CD8-positive, alpha-beta T cell (primary cell): ENCODE measurements at regions of chr7 and their contacts with region 1.

Region 1: DNA sequence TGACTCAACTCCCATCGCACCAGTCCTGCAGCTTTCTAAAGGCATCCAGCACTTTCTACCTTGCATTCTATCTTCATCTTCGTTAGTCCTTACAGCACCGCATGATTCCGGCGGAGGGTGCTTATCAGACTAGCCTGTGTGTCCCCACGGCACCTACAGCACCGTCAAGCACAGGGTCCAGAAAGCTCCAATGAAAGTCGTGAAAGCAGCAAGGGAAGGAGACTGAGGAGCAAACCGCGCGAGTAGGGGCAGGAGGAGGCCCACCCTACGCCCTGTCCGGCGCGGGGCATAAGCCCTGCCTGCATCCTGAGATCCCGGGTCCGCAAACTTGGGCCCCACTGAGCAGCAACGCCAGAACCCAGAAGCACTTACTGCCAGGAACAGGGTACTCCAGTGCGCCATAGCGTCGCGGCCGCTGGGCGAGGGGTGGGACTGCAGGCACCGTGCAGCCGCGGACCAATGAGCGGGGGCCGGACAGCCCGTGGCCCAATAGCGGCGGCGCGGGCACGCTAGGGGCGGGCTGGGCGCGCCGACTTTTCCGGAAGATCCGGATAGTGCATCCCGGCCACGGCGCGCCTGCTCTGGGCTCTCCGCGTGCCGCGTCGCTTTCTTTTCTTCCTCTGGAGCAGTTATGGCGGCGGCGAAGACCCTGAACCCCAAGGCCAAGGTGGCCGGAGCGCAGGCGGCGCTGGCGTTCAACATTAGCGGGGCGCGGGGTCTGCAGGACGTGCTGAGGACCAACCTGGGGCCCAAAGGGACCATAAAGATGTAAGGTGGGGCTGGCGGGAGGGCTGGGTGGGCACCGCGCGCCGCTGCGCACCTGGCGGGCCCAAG is 122.1 kb upstream of the VKORC1L1 start:
- DNase-seq: peak; percentile 65 to 91 (median 87)
- ATAC-seq: peak; percentile 96
- H3K4me3 ChIP-seq: peak overlapping the region; percentile 77 to 88
- H3K4me3 Mint-ChIP-seq: peak overlapping the region; percentile 88
- H3K27ac ChIP-seq: peak overlapping the region; percentile 74 to 81
- H3K27ac Mint-ChIP-seq: peak overlapping the region; percentile 88
- H3K4me1 ChIP-seq: peaks cover 16% of the 10 kb centered on the region
- H3K4me1 Mint-ChIP-seq: peaks cover 35% of the 10 kb centered on the region
- H3K27me3 ChIP-seq: no peaks in the 10 kb centered on the region
- H3K27me3 Mint-ChIP-seq: no peaks in the 10 kb centered on the region
- CTCF ChIP-seq: no peak

Region 2: GRCh38 chr7:64307254-64308015 is 1443.3 kb before region 1 on chr7:
- CTCF ChIA-PET with region 1: no interaction called
- POLR2A ChIA-PET with region 1: no interaction called
- intact Hi-C with region 1: loop called in 1 of 2 experiments (anchors 10 kb)
- DNase-seq: peak; percentile 88 to 97 (median 94)
- ATAC-seq: peak; percentile 98
- H3K4me3 ChIP-seq: peak overlapping the region; percentile 71 to 80
- H3K4me3 Mint-ChIP-seq: peak overlapping the region; percentile 95
- H3K27ac ChIP-seq: peak overlapping the region; percentile 77 to 91
- H3K27ac Mint-ChIP-seq: peak overlapping the region; percentile 99
- H3K4me1 ChIP-seq: peaks cover 14% of the 10 kb centered on the region
- H3K4me1 Mint-ChIP-seq: peaks cover 14% of the 10 kb centered on the region
- H3K27me3 ChIP-seq: no peaks in the 10 kb centered on the region
- H3K27me3 Mint-ChIP-seq: no peaks in the 10 kb centered on the region
- CTCF ChIP-seq: no peak

Region 3: DNA sequence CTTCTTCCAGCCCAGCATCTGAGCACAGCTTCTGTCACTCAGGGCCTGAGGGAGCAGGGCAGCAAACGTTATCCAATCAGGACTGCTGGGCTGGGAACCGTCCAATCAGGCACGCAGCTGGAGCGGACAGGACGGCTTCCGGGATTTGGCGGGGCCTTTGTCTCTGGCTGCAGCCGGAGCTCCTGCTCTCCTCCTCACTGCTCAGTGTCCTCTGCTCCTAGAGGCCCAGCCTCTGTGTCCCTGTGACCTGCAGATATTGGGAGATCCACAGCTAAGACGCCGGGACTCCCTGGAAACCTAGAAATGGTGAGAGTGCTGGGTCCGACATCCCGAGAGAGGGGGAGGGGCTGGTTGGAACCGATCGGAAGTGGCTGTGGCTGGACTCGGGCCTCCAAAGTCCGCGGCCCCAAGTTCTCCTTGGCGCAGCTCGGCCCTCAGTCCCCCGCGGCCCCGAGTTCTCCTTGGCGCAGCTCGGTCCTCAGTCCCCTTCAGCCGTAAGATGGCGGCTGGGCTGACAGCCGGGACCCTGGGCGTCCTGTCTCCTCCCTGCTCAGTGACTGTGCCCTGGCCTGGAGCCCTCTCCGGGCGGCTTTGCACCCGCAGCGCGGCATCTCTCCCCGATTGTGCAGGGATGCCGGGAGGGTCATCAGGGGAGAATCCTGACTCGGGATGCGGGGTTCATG is 1084.6 kb before region 1 on chr7 and contains the start of gene ZNF107:
- CTCF ChIA-PET with region 1: no interaction called
- POLR2A ChIA-PET with region 1: no interaction called
- intact Hi-C with region 1: loop called in 1 of 2 experiments (anchors 10 kb)
- DNase-seq: peak; percentile 73 to 94 (median 86)
- ATAC-seq: peak; percentile 95
- H3K4me3 ChIP-seq: peak within 1 kb of the TSS; percentile 93 to 95
- H3K4me3 Mint-ChIP-seq: peak within 1 kb of the TSS; percentile 96
- H3K27ac ChIP-seq: peak within 1 kb of the TSS; percentile 92 to 93
- H3K27ac Mint-ChIP-seq: peak within 1 kb of the TSS; percentile 96
- H3K4me1 ChIP-seq: peaks cover 14% of the 10 kb centered on the region
- H3K4me1 Mint-ChIP-seq: peaks cover 64% of the 10 kb centered on the region
- H3K27me3 ChIP-seq: no peaks in the 10 kb centered on the region
- H3K27me3 Mint-ChIP-seq: no peaks in the 10 kb centered on the region
- CTCF ChIP-seq: no peak
- total RNA-seq, gene ZNF107: 14.0 to 14.7 TPM

Region 4: DNA sequence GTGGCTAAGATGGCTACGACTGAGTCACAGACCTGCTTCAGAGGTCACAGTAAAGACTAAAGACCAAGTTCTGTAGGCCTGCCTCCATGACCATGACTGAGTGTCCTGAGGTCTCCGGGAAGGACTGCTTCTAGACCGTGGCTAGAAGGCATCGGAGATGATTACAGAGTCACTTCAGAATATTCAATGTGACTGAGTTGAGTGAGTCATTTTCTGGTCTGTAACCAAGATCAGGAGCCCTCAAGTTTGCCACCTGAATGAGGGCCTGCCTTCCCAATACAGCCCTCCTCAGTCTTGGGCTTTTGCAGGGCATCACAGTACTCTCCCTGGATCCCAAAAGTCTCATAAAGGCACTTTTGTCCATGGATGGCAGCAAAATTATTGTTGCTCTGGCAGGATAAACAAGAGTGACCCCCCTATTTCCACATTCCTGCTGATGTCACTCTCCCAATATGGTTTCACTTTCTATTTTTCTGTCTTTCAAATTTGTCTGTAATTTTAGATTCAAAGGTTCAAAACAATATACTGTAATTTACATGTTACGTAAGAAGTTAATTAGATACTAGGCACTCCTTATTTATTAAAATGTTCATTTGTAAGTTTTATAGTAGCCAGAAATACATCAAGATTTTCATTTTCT is 424.8 kb before region 1 on chr7:
- CTCF ChIA-PET with region 1: no interaction called
- POLR2A ChIA-PET with region 1: no interaction called
- intact Hi-C with region 1: no loop called
- DNase-seq: peak in 1 of 9 experiments; percentile 4
- ATAC-seq: no peak
- H3K4me3 ChIP-seq: no peak overlapping the region
- H3K4me3 Mint-ChIP-seq: no peak overlapping the region
- H3K27ac ChIP-seq: no peak overlapping the region
- H3K27ac Mint-ChIP-seq: no peak overlapping the region
- H3K4me1 ChIP-seq: no peaks in the 10 kb centered on the region
- H3K4me1 Mint-ChIP-seq: no peaks in the 10 kb centered on the region
- H3K27me3 ChIP-seq: no peaks in the 10 kb centered on the region
- H3K27me3 Mint-ChIP-seq: no peaks in the 10 kb centered on the region
- CTCF ChIP-seq: no peak

Region 5: DNA sequence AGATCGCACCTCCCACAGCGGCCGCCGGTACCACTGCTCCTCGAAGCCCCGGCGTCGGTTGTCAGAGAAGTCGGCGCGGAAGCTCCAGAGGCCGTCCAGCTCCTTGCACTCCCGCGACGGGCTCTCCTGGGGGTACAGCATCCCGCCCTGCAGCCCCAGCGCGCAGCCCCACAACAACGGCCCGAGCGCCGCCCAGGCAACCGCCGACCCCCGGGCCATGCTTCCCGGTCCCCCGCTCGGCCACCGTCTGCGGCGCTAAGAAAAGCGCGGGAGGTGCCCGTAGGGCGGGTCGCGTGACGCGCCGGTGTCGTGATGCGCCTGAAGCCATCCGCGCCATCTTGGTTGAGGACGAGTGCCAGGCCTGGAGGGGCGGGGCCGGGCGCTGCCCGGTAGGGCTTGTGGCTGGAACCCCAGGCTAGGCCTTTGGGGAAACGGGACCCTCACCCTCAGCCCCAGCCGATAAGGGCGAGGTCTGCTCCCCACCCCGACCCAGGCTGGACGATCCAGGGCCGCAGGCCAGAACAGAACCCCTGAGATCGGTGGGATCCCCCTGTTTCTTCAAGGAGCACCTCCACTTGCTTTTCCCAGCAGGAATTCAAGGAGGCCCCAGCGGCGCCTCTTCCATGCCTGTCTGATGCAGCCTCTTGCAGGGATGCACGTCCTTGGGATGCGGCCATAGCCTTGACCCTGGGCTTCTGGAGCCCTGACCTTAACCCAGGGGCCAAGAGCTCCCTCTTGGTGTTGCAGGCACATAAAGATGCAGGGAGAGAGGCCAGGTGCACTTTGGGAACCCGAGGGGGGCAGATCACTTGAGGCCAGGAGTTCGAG is 231.5 kb after region 1 on chr7 and contains the start of gene GUSB:
- CTCF ChIA-PET with region 1: no interaction called
- POLR2A ChIA-PET with region 1: no interaction called
- intact Hi-C with region 1: loop called (anchors 1 to 5 kb)
- DNase-seq: peak; percentile 80 to 93 (median 90)
- ATAC-seq: peak; percentile 87
- H3K4me3 ChIP-seq: peak within 1 kb of the TSS; percentile 83 to 90
- H3K4me3 Mint-ChIP-seq: peak within 1 kb of the TSS; percentile 85
- H3K27ac ChIP-seq: peak within 1 kb of the TSS; percentile 69 to 73
- H3K27ac Mint-ChIP-seq: peak within 1 kb of the TSS; percentile 88
- H3K4me1 ChIP-seq: peaks cover 18% of the 10 kb centered on the region
- H3K4me1 Mint-ChIP-seq: peaks cover 14% of the 10 kb centered on the region
- H3K27me3 ChIP-seq: no peaks in the 10 kb centered on the region
- H3K27me3 Mint-ChIP-seq: no peaks in the 10 kb centered on the region
- CTCF ChIP-seq: no peak
- total RNA-seq, gene GUSB: 37.0 to 41.8 TPM

Region 6: DNA sequence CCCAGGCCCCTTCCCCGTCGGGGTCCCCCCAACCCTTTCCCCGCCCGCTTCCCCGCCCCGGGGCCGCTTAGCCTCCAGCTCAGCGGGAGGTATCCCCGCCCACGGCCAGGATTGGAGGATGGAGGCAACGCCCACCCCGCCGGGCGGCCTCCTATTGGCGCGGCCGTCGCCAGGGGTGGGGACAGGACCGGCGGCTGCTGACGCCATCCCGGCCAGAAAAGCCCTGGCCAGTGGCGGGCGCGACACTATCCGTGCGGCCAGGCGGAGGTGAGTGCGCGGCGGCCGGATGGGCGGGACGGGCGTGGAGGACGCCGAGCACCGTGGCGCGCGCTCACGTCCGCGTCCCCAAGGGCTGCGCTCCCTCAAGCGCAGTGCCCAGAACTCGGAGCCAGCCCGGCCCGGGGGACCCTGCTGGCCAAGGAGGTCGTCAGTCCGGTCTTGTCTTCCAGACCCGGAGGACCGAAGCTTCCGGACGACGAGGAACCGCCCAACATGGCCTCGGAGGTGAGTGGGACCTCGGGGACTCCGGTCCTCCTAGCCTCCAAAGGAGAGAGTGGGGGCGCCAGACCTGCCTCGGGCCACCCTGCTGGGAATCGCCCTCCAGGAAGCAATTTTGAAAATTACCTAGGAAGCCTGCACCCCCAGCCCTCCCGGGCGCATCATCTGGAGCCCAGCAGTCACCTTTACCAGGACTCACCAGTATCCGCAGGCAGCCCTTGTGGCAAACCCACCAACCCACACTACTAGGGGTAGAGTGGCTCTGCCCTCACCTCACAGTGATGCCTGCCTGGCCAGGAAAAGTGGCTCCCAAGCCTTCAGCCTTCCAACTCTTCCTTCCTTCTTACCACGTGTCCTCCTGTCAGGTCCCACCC is 325.1 kb after region 1 on chr7 and contains the start of gene ASL:
- CTCF ChIA-PET with region 1: no interaction called
- POLR2A ChIA-PET with region 1: no interaction called
- intact Hi-C with region 1: loop called in 1 of 2 experiments (anchors 2 kb)
- DNase-seq: peak; percentile 65 to 93 (median 84)
- ATAC-seq: peak; percentile 98
- H3K4me3 ChIP-seq: peak within 1 kb of the TSS; percentile 66 to 96
- H3K4me3 Mint-ChIP-seq: peak within 1 kb of the TSS; percentile 87
- H3K27ac ChIP-seq: peak within 1 kb of the TSS; percentile 55 to 67
- H3K27ac Mint-ChIP-seq: no peak within 1 kb of the TSS
- H3K4me1 ChIP-seq: peaks cover 11% of the 10 kb centered on the region
- H3K4me1 Mint-ChIP-seq: peaks cover 14% of the 10 kb centered on the region
- H3K27me3 ChIP-seq: no peaks in the 10 kb centered on the region
- H3K27me3 Mint-ChIP-seq: no peaks in the 10 kb centered on the region
- CTCF ChIP-seq: no peak
- total RNA-seq, gene ASL: 6.8 to 7.5 TPM

Region 7: GRCh38 chr7:66837007-66837406 is 1086.3 kb after region 1 on chr7:
- CTCF ChIA-PET with region 1: no interaction called
- POLR2A ChIA-PET with region 1: no interaction called
- intact Hi-C with region 1: no loop called
- DNase-seq: peak in 2 of 9 experiments; percentile 32 to 39
- ATAC-seq: no peak
- H3K4me3 ChIP-seq: no peak overlapping the region
- H3K4me3 Mint-ChIP-seq: no peak overlapping the region
- H3K27ac ChIP-seq: no peak overlapping the region
- H3K27ac Mint-ChIP-seq: no peak overlapping the region
- H3K4me1 ChIP-seq: no peaks in the 10 kb centered on the region
- H3K4me1 Mint-ChIP-seq: no peaks in the 10 kb centered on the region
- H3K27me3 ChIP-seq: no peaks in the 10 kb centered on the region
- H3K27me3 Mint-ChIP-seq: no peaks in the 10 kb centered on the region
- CTCF ChIP-seq: no peak